CD8-positive, alpha-beta T cell (primary cell): ENCODE measurements at regions of chr9 and their contacts with region 1.

Region 1: DNA sequence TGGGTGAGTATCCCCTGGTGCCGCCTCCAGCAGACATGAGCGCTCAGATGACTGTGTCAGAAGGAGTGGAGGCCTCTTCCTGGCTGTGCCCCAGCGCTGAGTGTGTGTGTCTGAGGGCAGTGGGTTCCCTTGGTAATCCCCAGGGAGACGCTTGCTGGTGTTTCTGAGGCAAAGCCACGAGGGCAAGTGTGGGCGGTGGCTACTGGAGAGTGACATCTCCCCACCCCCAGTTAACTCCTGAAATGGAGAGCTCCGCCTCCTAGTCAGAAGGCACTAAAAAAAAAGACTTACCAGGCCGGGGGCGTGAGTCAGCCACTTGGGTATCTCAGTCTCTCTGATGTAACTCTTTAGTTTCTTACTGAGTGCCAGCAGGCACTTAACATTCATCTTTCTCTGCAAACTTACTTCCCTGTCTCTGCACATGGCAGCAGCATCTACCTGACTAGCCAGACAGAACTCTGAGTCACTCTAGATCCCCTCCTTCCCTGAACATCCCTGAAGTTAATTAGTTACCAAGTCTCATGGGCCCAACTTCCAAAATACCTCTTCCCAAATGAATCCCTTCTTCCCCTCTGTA is 19.3 kb downstream of the ORM2 start:
- DNase-seq: peak in 7 of 9 experiments; percentile 48 to 88 (median 70)
- ATAC-seq: peak; percentile 87
- H3K4me3 ChIP-seq: no peak overlapping the region
- H3K4me3 Mint-ChIP-seq: peak overlapping the region; percentile 36
- H3K27ac ChIP-seq: peak overlapping the region; percentile 21 to 62
- H3K27ac Mint-ChIP-seq: peak overlapping the region; percentile 95
- H3K4me1 ChIP-seq: peaks cover 50% of the 10 kb centered on the region
- H3K4me1 Mint-ChIP-seq: peaks cover 63% of the 10 kb centered on the region
- H3K27me3 ChIP-seq: no peaks in the 10 kb centered on the region
- H3K27me3 Mint-ChIP-seq: no peaks in the 10 kb centered on the region
- CTCF ChIP-seq: no peak

Region 2: GRCh38 chr9:114366334-114367128 is 17.5 kb after region 1 on chr9:
- CTCF ChIA-PET with region 1: interaction called, 4 read pairs
- POLR2A ChIA-PET with region 1: interaction called, 19 read pairs
- intact Hi-C with region 1: loop called (anchors 2 kb)
- DNase-seq: peak in 4 of 9 experiments; percentile 59 to 87 (median 76)
- ATAC-seq: peak; percentile 56
- H3K4me3 ChIP-seq: peak overlapping the region in 1 of 2 experiments; percentile 13
- H3K4me3 Mint-ChIP-seq: peak overlapping the region; percentile 35
- H3K27ac ChIP-seq: peak overlapping the region; percentile 60 to 98
- H3K27ac Mint-ChIP-seq: peak overlapping the region; percentile 92
- H3K4me1 ChIP-seq: peaks cover 96% of the 10 kb centered on the region
- H3K4me1 Mint-ChIP-seq: peaks cover 85% of the 10 kb centered on the region
- H3K27me3 ChIP-seq: no peaks in the 10 kb centered on the region
- H3K27me3 Mint-ChIP-seq: no peaks in the 10 kb centered on the region
- CTCF ChIP-seq: no peak

Region 3: DNA sequence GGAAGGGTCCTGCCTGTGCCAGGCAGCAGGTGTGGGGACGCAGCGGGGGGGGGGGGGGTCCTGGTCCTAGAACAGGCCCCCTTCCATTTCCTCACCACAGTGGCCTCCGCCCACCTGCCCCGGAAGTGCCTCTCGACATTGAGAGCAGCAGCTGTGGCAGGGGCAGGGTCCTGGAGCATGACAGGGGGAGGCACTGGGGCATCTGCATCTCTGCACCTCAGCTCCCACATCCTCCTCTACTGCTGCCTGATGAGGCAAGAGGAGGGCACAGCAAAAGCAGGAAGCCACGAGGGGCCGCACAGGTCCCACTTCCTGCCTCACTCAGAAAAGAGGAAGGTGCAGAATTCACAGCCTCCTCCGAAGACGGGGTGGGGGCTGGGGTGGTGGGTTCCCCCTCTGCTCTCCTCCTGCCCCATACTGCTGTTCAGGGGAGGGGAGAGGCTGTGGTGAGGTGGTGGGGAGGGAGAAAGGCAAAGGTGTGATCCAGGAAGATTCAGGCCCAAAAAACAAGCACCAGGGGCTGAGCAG is 24.0 kb after region 1 on chr9:
- CTCF ChIA-PET with region 1: interaction called, 4 read pairs
- POLR2A ChIA-PET with region 1: interaction called, 19 read pairs
- intact Hi-C with region 1: loop called in 1 of 2 experiments (anchors 2 kb)
- DNase-seq: peak; percentile 70 to 98 (median 86)
- ATAC-seq: peak; percentile 80
- H3K4me3 ChIP-seq: peak overlapping the region; percentile 28 to 36
- H3K4me3 Mint-ChIP-seq: peak overlapping the region; percentile 83
- H3K27ac ChIP-seq: peak overlapping the region; percentile 72 to 98
- H3K27ac Mint-ChIP-seq: peak overlapping the region; percentile 89
- H3K4me1 ChIP-seq: peaks cover 95% of the 10 kb centered on the region
- H3K4me1 Mint-ChIP-seq: peaks cover 89% of the 10 kb centered on the region
- H3K27me3 ChIP-seq: no peaks in the 10 kb centered on the region
- H3K27me3 Mint-ChIP-seq: no peaks in the 10 kb centered on the region
- CTCF ChIP-seq: no peak